ENCODE measurements at regions of chr16 and their contacts with region 1.

Region 1: DNA sequence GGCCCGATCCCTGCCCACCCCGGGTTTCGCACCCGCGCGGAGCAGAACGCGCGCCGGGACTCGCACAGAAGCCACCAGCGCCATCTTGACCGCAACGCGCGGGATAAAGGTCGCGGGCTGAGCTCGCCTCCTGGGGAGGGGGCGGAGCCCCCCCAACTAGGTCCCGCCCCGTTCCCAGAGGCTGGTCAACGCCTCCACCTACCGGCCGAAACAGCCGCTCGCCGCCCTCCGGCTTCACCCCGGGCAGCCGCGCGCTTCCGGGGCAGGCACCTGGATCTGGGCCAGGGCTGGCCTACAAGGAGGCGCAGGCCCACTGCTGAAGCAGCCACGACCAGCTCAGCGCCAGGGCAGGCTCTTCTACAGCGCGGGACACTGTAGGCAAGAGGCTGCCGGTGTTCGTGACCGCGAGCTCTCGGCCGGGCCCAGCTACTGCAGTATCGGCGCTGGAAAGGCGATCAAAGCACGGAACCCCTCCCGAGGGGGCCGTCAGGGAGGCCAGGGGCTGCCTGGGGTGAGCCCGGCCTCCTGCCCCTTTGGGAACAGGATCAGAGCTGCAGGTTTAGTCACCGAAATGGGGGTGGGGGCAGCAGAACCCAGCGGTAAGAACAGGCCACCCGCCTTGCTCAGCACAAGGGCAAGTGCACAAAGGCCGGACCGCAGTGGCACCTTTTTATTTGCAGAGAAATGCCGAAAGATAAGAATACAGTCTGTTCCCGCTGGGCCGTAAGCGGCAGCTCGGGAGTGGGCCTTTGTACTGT is at the start of gene ECI1:
- DNase-seq: peak; percentile 64
- ATAC-seq: peak; percentile 90
- H3K4me3 ChIP-seq: peak within 1 kb of the TSS; percentile 73 to 87
- H3K27ac ChIP-seq: peak within 1 kb of the TSS; percentile 90
- H3K4me1 ChIP-seq: peaks cover 22% of the 10 kb centered on the region
- H3K27me3 ChIP-seq: no peaks in the 10 kb centered on the region
- CTCF ChIP-seq: no peak; the same call in 1 of the 2 replicates
- total RNA-seq, gene ECI1: 117 TPM

Region 2: GRCh38 chr16:2223375-2224182 is 28.1 kb before region 1 on chr16 and contains the start of gene E4F1:
- CTCF ChIA-PET with region 1: no interaction called
- POLR2A ChIA-PET with region 1: interaction called, 14 read pairs
- in situ Hi-C with region 1: no loop called
- intact Hi-C with region 1: no loop called
- DNase-seq: peak; percentile 95
- ATAC-seq: peak; percentile 97
- H3K4me3 ChIP-seq: peak within 1 kb of the TSS; percentile 95 to 96
- H3K27ac ChIP-seq: peak within 1 kb of the TSS; percentile 76
- H3K4me1 ChIP-seq: peaks cover 16% of the 10 kb centered on the region
- H3K27me3 ChIP-seq: no peaks in the 10 kb centered on the region
- CTCF ChIP-seq: no peak
- total RNA-seq, gene E4F1: 50.8 TPM

Region 3: DNA sequence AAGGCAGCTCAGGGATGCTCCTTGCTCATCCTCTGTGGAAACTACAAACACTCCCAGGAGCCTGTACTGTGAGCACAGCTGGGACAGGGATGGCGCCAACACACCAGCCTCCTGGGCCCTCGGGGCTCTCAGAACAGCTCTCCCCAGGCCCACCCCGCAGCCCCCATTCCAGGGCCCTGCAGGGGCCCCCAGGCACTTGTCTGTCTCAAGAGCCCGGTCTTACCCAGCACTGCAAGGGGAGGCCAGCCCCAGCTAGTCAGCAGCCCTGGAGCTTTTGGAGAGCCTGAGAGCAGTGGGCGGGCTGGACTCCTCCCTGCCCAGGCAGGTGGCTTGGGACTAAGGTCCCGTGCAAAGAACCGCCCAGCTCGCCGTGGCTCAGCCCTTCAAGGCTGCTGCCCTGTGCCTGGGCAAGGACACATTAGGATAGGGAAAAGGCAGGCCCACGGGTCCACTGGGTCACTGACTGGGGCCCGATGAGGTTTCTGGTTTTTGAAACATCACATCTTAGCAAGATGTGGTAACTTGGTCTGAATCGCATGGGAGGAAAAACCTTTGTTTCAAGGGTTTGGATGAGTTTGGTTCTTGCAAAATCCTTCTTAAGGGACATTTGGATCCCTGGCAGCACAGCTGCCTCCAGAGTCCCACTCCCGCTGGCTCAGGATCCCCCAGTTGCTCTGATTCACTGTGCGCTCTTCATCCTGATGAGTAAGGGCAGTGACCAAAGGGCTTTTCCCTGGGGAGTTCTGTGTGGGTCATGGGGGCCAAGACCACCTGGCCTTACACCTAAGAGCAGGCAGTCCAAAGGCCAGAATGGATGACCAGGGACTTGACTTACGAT is 12.6 kb before region 1 on chr16:
- CTCF ChIA-PET with region 1: interaction called, 11 read pairs
- POLR2A ChIA-PET with region 1: interaction called, 5 read pairs
- in situ Hi-C with region 1: no loop called
- intact Hi-C with region 1: no loop called
- DNase-seq: no peak
- ATAC-seq: peak; percentile 52
- H3K4me3 ChIP-seq: no peak overlapping the region
- H3K27ac ChIP-seq: peak overlapping the region; percentile 51
- H3K4me1 ChIP-seq: peaks cover 8% of the 10 kb centered on the region
- H3K27me3 ChIP-seq: no peaks in the 10 kb centered on the region
- CTCF ChIP-seq: no peak

Region 4: GRCh38 chr16:2975161-2975795 is 723.6 kb after region 1 on chr16:
- CTCF ChIA-PET with region 1: no interaction called
- POLR2A ChIA-PET with region 1: interaction called, 15 read pairs
- in situ Hi-C with region 1: no loop called
- intact Hi-C with region 1: no loop called
- DNase-seq: no peak
- ATAC-seq: no peak
- H3K4me3 ChIP-seq: no peak overlapping the region
- H3K27ac ChIP-seq: no peak overlapping the region
- H3K4me1 ChIP-seq: peaks cover 58% of the 10 kb centered on the region
- H3K27me3 ChIP-seq: no peaks in the 10 kb centered on the region
- CTCF ChIP-seq: no peak

Measured in Panc1 (cell line).